ENCODE measurements at regions of chr13 and their contacts with region 1.

Region 1: GRCh38 chr13:51286135-51287002 is 53.1 kb upstream of the SERPINE3 start:
- DNase-seq: peak; percentile 77 to 87
- H3K4me3 ChIP-seq: no peak overlapping the region
- H3K4me3 Mint-ChIP-seq: no peak overlapping the region
- H3K27ac Mint-ChIP-seq: no peak overlapping the region
- H3K4me1 ChIP-seq: no peaks in the 10 kb centered on the region
- H3K4me1 Mint-ChIP-seq: peaks cover 7% of the 10 kb centered on the region
- H3K27me3 ChIP-seq: no peaks in the 10 kb centered on the region
- H3K27me3 Mint-ChIP-seq: no peaks in the 10 kb centered on the region
- CTCF ChIP-seq: peak; percentile 91 to 97

Region 2: GRCh38 chr13:51125498-51126226 is 160.7 kb before region 1 on chr13:
- CTCF ChIA-PET with region 1: interaction called, 41 read pairs
- POLR2A ChIA-PET with region 1: no interaction called
- intact Hi-C with region 1: loop called (anchors 1 kb)
- DNase-seq: peak; percentile 60 to 66
- H3K4me3 ChIP-seq: no peak overlapping the region
- H3K4me3 Mint-ChIP-seq: no peak overlapping the region
- H3K27ac Mint-ChIP-seq: no peak overlapping the region
- H3K4me1 ChIP-seq: peaks cover 36% of the 10 kb centered on the region
- H3K4me1 Mint-ChIP-seq: peaks cover 18% of the 10 kb centered on the region
- H3K27me3 ChIP-seq: no peaks in the 10 kb centered on the region
- H3K27me3 Mint-ChIP-seq: no peaks in the 10 kb centered on the region
- CTCF ChIP-seq: peak; percentile 67 to 75

Region 3: DNA sequence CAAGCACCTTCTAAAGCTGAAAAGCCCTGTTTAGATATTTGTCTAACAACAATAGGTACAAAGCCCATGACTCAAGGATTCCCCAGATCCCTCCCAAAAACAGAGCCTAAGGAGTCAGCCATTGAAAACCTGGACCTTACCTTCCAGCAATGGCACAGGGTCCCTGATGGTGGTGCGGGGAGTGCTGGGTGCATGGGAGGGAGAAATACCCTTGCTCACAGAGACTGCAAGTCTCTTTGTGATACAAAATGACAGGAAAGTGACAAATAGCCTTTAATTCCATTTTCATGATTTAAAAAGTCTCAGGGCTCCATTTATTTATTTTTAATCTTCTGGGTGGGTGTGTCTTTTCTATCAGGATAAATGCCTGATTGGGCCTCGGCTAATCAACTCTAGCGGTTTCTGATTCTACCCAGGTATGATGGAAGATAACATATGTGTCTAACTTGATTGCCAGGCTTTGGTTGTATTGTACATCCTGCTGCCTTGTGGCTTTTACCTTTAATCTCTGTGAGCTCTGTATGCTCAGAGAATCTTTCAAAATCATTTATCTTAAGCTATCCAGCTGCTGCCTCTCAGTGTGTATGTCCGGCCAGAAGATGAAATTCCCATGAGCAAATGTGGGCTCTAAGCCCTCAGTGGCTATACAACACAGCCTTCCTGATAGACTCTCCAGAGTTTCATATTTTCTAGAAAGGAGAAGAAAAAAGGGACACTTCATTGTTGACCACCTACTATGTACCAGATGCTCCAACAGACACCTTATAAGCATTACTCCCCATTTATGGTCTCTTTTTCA is 118.8 kb before region 1 on chr13:
- CTCF ChIA-PET with region 1: no interaction called
- POLR2A ChIA-PET with region 1: no interaction called
- intact Hi-C with region 1: no loop called
- DNase-seq: no peak
- H3K4me3 ChIP-seq: no peak overlapping the region
- H3K4me3 Mint-ChIP-seq: no peak overlapping the region
- H3K27ac Mint-ChIP-seq: no peak overlapping the region
- H3K4me1 ChIP-seq: no peaks in the 10 kb centered on the region
- H3K4me1 Mint-ChIP-seq: no peaks in the 10 kb centered on the region
- H3K27me3 ChIP-seq: no peaks in the 10 kb centered on the region
- H3K27me3 Mint-ChIP-seq: peaks cover 7% of the 10 kb centered on the region
- CTCF ChIP-seq: no peak

Region 4: DNA sequence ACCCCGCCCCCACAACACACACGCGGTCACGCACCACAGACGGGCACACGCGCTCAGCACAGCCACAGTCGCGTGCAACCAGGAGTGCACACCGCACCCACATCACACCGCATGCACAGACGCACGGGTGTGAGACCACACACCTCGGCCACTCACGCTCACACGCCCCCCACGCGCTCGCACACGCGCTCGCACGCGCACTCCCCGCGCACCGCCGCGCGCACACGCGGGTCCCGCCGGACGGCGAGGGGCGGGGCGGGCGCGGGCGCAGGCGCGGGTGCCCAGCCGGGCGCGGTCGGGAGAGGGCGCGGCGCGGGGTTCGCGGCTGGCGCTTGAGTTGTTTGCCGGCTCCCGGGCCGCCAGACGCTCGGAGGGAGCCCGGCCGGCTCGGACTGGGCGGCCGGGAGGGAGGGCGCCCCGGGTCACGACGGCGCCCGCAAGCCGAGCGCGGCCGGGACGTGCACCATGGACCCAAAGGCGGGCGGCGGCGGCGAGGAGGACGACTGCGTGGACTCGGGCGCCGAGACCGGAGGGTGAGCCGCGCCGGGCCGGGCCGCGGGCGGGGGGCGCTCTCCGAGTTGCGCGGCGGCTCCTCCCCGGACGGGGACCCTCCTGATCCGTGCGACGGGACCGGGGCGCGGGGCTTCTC is 64.2 kb before region 1 on chr13 and contains the start of gene FAM124A:
- CTCF ChIA-PET with region 1: interaction called, 10 read pairs
- POLR2A ChIA-PET with region 1: no interaction called
- intact Hi-C with region 1: loop called (anchors 5 kb)
- DNase-seq: peak in 1 of 2 experiments; percentile 76
- H3K4me3 ChIP-seq: peak within 1 kb of the TSS; percentile 50
- H3K4me3 Mint-ChIP-seq: peak within 1 kb of the TSS; percentile 67
- H3K27ac Mint-ChIP-seq: no peak within 1 kb of the TSS
- H3K4me1 ChIP-seq: peaks cover 5% of the 10 kb centered on the region; the same call in 1 of the 2 replicates
- H3K4me1 Mint-ChIP-seq: no peaks in the 10 kb centered on the region
- H3K27me3 ChIP-seq: peaks cover 4% of the 10 kb centered on the region
- H3K27me3 Mint-ChIP-seq: peaks cover 26% of the 10 kb centered on the region
- CTCF ChIP-seq: peak in 1 of 2 experiments; percentile 10
- total RNA-seq, gene FAM124A: 0.46 and 0.52 TPM in 2 replicates

Region 5: DNA sequence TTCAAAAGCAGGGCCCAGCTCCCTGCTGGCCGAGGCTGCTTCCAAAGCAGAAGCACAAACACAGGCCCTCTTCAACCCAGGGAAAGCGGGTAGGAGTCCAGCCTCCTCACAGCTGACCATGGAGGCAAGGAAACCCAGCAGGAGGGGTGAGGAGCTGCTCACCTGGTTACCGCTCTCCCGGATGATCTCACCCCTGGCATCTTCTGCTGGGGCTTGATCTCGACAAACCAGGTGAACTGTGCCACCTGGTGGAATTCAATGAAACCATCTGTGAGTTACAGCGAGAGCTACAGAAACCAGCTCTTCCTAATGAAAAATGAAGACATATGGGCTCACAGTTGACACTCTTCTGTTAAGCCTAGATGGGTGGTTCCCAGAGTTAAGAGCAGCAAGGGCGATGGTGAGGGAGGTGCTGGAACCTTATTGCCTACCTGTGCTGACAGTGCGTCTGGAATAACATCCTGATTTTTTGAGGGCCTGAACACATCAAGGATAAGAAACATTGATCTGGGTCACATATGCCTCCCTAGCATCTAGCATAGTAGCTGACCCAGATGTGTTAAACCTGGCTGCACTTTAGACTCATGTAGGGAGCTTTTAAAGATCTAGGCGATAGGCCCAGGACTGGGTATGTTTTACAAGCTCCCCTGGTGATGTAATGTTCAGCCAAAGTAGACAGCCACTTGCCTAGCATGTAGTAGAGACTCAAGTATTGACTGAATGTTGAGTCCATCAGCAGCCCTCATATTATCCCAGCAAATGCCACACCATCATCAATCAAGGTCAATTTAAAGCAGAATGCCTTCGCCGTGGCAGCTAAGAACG is 511.5 kb after region 1 on chr13:
- CTCF ChIA-PET with region 1: interaction called, 9 read pairs
- POLR2A ChIA-PET with region 1: no interaction called
- intact Hi-C with region 1: loop called (anchors 5 kb)
- DNase-seq: peak; percentile 68 to 72
- H3K4me3 ChIP-seq: no peak overlapping the region
- H3K4me3 Mint-ChIP-seq: no peak overlapping the region
- H3K27ac Mint-ChIP-seq: no peak overlapping the region
- H3K4me1 ChIP-seq: peaks cover 13% of the 10 kb centered on the region; the same call in 1 of the 2 replicates
- H3K4me1 Mint-ChIP-seq: no peaks in the 10 kb centered on the region
- H3K27me3 ChIP-seq: no peaks in the 10 kb centered on the region
- H3K27me3 Mint-ChIP-seq: no peaks in the 10 kb centered on the region
- CTCF ChIP-seq: peak; percentile 59 to 69